AG04450 (cell line): ENCODE measurements at regions of chr19 and their contacts with region 1.

Region 1: GRCh38 chr19:12825254-12826131 is 8.9 kb downstream of the RTBDN start:
- DNase-seq: no peak
- H3K4me3 ChIP-seq: no peak overlapping the region
- H3K27ac ChIP-seq: no peak overlapping the region
- H3K27me3 ChIP-seq: peaks cover 9% of the 10 kb centered on the region
- CTCF ChIP-seq: peak; percentile 33; the same call in 1 of the 2 replicates

Region 2: GRCh38 chr19:12696366-12697335 is 128.8 kb before region 1 on chr19 and contains the start of gene FBXW9:
- CTCF ChIA-PET with region 1: no interaction called
- POLR2A ChIA-PET with region 1: no interaction called
- DNase-seq: peak; percentile 88
- H3K4me3 ChIP-seq: peak within 1 kb of the TSS; percentile 96
- H3K27ac ChIP-seq: peak within 1 kb of the TSS; percentile 75
- H3K27me3 ChIP-seq: no peaks in the 10 kb centered on the region
- CTCF ChIP-seq: no peak
- polyA plus RNA-seq, gene FBXW9: 4.8 and 7.2 TPM in 2 replicates

Region 3: DNA sequence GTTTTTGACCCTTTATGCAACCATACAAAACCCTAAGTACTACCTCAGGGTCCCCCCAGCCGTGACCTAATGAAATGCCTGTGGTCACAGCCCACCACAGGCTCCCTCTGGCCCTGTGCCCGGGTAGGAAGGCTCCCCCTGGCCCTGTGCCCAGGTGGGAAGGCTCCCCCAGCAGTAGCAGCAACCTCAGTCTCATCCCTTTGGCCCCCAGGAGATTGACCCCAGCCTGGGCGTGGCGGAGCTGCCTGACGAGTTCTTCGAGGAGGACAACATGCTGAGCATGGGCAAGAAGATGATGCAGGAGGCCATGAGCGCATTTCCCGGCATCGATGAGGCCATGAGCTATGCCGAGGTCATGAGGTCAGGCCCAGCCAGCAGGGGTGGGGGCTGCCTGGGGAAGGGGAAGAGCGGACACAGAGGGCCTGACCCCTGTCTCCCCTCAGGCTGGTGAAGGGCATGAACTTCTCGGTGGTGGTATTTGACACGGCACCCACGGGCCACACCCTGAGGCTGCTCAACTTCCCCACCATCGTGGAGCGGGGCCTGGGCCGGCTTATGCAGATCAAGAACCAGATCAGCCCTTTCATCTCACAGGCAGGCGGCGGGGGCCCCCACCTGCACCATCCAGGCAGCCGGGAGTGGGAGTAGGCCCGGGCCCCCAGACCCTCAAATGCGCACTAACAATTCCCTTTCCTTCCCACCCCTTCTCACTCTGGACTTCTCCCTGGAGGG is 80.2 kb before region 1 on chr19:
- CTCF ChIA-PET with region 1: no interaction called
- POLR2A ChIA-PET with region 1: no interaction called
- DNase-seq: no peak
- H3K4me3 ChIP-seq: no peak overlapping the region
- H3K27ac ChIP-seq: no peak overlapping the region
- H3K27me3 ChIP-seq: no peaks in the 10 kb centered on the region
- CTCF ChIP-seq: no peak

Region 4: DNA sequence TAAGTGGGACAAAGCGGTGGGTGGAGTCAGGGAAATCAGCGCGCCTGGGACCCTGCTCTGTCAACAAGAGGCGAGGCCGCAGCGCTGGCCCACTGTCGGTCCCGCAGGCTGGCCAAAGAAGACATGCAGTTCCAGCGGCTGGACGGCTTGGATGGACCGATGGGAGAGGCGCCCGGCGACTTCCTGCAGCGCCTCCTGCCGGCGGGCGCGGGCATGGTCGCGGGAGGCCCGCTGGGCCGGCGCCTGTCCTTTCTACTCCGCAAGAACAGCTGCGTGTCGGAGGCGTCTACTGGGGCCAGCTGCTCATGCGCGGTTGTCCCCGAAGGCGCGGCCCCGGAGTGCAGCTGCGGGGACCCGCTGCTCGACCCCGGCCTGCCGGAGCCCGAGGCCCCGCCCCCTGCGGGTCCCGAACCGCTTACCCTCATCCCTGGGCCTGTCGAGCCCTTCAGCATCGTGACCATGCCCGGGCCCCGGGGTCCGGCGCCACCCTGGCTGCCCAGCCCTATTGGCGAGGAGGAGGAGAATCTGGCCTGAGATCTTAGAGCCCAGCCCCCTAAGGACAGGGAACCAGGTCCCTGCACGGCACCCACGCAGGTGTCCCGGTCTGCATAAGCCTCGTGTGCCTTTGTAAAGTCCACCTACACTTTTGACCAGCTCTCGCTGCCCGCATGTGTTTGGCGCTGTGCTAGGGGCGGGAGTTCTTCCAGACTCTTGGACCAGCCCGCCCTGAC is 67.8 kb before region 1 on chr19:
- CTCF ChIA-PET with region 1: interaction called, 13 read pairs
- POLR2A ChIA-PET with region 1: no interaction called
- DNase-seq: no peak
- H3K4me3 ChIP-seq: peak overlapping the region; percentile 53
- H3K27ac ChIP-seq: no peak overlapping the region
- H3K27me3 ChIP-seq: peaks cover 3% of the 10 kb centered on the region
- CTCF ChIP-seq: peak; percentile 76